Mammary epithelial cell (primary cell): ENCODE measurements at regions of chr11 and their contacts with region 1.

Region 1: DNA sequence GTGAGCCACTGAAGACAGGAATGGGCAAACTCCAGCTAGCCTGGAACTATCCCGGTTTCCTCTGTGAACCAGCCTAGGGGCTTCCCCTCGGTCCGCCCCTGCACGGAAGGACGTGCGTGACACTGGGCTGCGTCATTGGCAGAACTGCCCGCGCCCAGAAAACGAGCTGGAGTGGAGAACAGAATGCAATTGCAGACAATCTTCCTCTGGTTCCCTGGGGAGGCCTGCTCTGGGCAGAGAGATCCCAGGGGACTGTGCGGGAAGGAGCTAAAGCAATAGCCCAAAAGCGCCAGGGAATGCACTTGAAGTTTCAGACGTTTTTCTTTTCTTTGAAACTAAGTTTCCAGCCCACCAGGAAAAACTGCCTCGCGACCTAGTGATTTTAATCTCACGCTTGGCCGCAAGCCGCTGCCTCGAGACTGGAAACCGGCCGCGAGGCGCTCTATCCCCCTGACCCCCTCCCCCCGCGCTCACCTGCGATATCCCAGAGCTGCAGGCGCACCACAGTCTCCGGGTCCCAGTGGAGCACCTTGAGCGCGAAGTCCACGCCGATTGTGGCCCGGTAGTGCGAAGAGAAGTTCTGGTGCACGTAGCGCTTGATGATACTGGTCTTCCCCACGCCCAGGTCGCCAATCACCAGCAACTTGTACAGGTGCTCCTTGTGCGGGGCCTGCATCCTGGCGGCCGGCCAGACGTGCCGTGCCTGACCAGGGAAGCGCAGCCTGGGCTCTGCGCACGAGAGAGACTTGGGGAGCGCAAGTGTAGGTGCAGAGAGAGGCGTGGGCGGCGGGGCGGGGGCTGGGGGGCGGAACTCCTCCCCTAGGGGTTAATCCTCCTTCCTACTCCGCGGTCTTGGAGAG is at the start of gene RAB38:
- DNase-seq: peak; percentile 93
- H3K4me3 ChIP-seq: peak within 1 kb of the TSS; percentile 69 to 83 (median 79)
- H3K27ac ChIP-seq: peak within 1 kb of the TSS; percentile 92
- H3K4me1 ChIP-seq: peaks cover 75% of the 10 kb centered on the region
- H3K27me3 ChIP-seq: no peaks in the 10 kb centered on the region
- CTCF ChIP-seq: no peak
- total RNA-seq, gene RAB38: 55.8 to 87.7 TPM

Region 2: DNA sequence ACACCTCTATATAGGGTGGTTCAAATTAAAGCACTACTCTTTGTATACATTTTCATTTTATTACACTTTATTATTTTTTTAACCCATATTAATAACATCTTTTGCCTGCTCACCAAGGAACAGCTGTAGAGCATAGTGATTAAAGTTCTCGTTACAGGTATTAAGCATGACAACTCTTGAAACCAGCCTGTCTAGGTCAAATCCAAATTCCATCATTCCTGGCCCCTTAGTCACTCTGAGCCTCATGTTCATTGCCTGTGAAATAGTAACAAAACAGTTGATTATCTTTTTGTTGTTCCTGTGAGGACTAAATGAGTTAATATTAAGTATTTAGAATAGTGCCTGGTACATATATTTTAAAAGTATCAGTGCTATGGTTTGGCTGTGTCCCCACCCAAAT is 334.2 kb before region 1 on chr11:
- CTCF ChIA-PET with region 1: no interaction called
- dilution Hi-C with region 1: no loop called
- in situ Hi-C with region 1: no loop called
- intact Hi-C with region 1: no loop called
- DNase-seq: peak; percentile 16
- H3K4me3 ChIP-seq: no peak overlapping the region
- H3K27ac ChIP-seq: no peak overlapping the region
- H3K4me1 ChIP-seq: no peaks in the 10 kb centered on the region
- H3K27me3 ChIP-seq: no peaks in the 10 kb centered on the region
- CTCF ChIP-seq: no peak

Region 3: GRCh38 chr11:88103337-88104206 is 71.4 kb before region 1 on chr11:
- CTCF ChIA-PET with region 1: interaction called, 5 read pairs
- dilution Hi-C with region 1: no loop called
- in situ Hi-C with region 1: no loop called
- intact Hi-C with region 1: loop called (anchors 2 kb)
- DNase-seq: peak; percentile 47
- H3K4me3 ChIP-seq: no peak overlapping the region
- H3K27ac ChIP-seq: peak overlapping the region; percentile 54
- H3K4me1 ChIP-seq: peaks cover 14% of the 10 kb centered on the region
- H3K27me3 ChIP-seq: no peaks in the 10 kb centered on the region
- CTCF ChIP-seq: peak; percentile 63 to 81

Region 4: GRCh38 chr11:88231894-88232482 is 57.0 kb after region 1 on chr11:
- CTCF ChIA-PET with region 1: no interaction called
- dilution Hi-C with region 1: no loop called
- in situ Hi-C with region 1: no loop called
- intact Hi-C with region 1: loop called (anchors 5 kb)
- DNase-seq: peak; percentile 34
- H3K4me3 ChIP-seq: no peak overlapping the region
- H3K27ac ChIP-seq: no peak overlapping the region
- H3K4me1 ChIP-seq: no peaks in the 10 kb centered on the region
- H3K27me3 ChIP-seq: no peaks in the 10 kb centered on the region
- CTCF ChIP-seq: peak; percentile 72 to 75

Region 5: GRCh38 chr11:88246696-88247095 is 71.8 kb after region 1 on chr11:
- CTCF ChIA-PET with region 1: no interaction called
- dilution Hi-C with region 1: no loop called
- in situ Hi-C with region 1: no loop called
- intact Hi-C with region 1: loop called (anchors 5 kb)
- DNase-seq: peak; percentile 74
- H3K4me3 ChIP-seq: no peak overlapping the region
- H3K27ac ChIP-seq: peak overlapping the region; percentile 57
- H3K4me1 ChIP-seq: peaks cover 3% of the 10 kb centered on the region
- H3K27me3 ChIP-seq: no peaks in the 10 kb centered on the region
- CTCF ChIP-seq: no peak

Region 6: DNA sequence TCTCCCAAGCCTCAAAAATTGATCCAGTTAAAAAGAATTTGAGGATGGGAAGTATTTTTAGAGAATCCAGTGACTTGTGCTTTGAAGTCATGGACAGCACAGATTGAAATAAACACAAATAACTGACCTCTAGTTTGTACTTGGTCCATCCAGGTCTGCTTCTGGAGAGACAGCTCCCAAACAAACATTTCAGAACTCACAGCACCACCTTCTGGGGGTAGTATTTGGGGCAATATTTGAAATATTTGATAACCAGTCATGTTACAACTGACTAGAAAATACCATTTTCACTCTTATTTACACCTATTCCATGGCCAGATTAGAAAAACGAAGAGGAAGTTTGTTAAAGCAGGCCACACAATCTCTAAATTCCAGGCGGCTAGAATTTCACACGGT is 106.4 kb after region 1 on chr11:
- CTCF ChIA-PET with region 1: no interaction called
- dilution Hi-C with region 1: no loop called
- in situ Hi-C with region 1: no loop called
- intact Hi-C with region 1: loop called (anchors 5 kb)
- DNase-seq: no peak
- H3K4me3 ChIP-seq: no peak overlapping the region
- H3K27ac ChIP-seq: no peak overlapping the region
- H3K4me1 ChIP-seq: peaks cover 6% of the 10 kb centered on the region
- H3K27me3 ChIP-seq: no peaks in the 10 kb centered on the region
- CTCF ChIP-seq: peak; percentile 14 to 44

Region 7: GRCh38 chr11:88337181-88337986 is 162.4 kb after region 1 on chr11 and contains the start of gene CTSC:
- CTCF ChIA-PET with region 1: no interaction called
- dilution Hi-C with region 1: no loop called
- in situ Hi-C with region 1: no loop called
- intact Hi-C with region 1: loop called (anchors 1 kb)
- DNase-seq: peak; percentile 92
- H3K4me3 ChIP-seq: peak within 1 kb of the TSS; percentile 95 to 96 (median 96)
- H3K27ac ChIP-seq: peak within 1 kb of the TSS; percentile 85
- H3K4me1 ChIP-seq: peaks cover 24% of the 10 kb centered on the region
- H3K27me3 ChIP-seq: no peaks in the 10 kb centered on the region
- CTCF ChIP-seq: peak in 1 of 2 donors; percentile 19
- total RNA-seq, gene CTSC: 192 to 609 TPM

Region 8: DNA sequence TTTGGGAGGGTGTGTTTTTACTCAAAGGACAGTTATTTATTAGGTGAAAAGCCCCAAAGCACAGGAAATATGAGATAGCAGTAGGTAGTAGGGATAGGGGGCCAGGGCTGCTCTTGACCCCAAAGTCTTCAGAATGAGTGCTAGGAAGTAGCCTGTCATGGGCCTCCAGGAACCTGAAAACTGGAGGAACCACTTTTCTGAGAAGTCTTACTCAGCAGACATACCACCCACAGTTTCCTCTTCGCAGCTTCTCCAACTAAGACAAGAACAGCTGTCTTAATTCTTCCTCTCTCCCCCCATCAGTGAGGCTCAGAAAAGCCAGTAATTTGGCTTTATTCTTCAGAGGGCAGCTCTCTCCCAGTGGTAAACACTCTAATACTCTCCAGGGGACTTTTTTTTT is 246.6 kb after region 1 on chr11:
- CTCF ChIA-PET with region 1: no interaction called
- dilution Hi-C with region 1: no loop called
- in situ Hi-C with region 1: no loop called
- intact Hi-C with region 1: loop called (anchors 5 kb)
- DNase-seq: peak; percentile 82
- H3K4me3 ChIP-seq: no peak overlapping the region
- H3K27ac ChIP-seq: peak overlapping the region; percentile 95
- H3K4me1 ChIP-seq: peaks cover 45% of the 10 kb centered on the region
- H3K27me3 ChIP-seq: no peaks in the 10 kb centered on the region
- CTCF ChIP-seq: no peak